ENCODE measurements at regions of chr1 and their contacts with region 1.

Region 1: GRCh38 chr1:33517596-33518250 is 45.3 kb downstream of the ZSCAN20 start:
- DNase-seq: no peak
- ATAC-seq: no peak
- H3K4me3 ChIP-seq: no peak overlapping the region
- H3K27ac ChIP-seq: no peak overlapping the region
- H3K4me1 ChIP-seq: peaks cover 0 to 6% of the 10 kb centered on the region in 2 experiments; a peak in 2 of 5 replicates
- H3K27me3 ChIP-seq: peaks cover 36 to 67% of the 10 kb centered on the region in 2 experiments
- CTCF ChIP-seq: no peak
- EP300 ChIP-seq: no peak
- POLR2A ChIP-seq: no peak
- RAD21 ChIP-seq: no peak

Region 2: GRCh38 chr1:33358778-33359503 is 158.8 kb before region 1 on chr1:
- CTCF ChIA-PET with region 1: no interaction called
- POLR2A ChIA-PET with region 1: no interaction called
- in situ Hi-C with region 1: no loop called
- intact Hi-C with region 1: no loop called
- DNase-seq: no peak
- ATAC-seq: no peak
- H3K4me3 ChIP-seq: no peak overlapping the region
- H3K27ac ChIP-seq: no peak overlapping the region
- H3K4me1 ChIP-seq: peaks cover 7 to 18% of the 10 kb centered on the region in 2 experiments
- H3K27me3 ChIP-seq: no peaks in the 10 kb centered on the region
- CTCF ChIP-seq: no peak
- EP300 ChIP-seq: no peak
- POLR2A ChIP-seq: no peak
- RAD21 ChIP-seq: no peak

Region 3: DNA sequence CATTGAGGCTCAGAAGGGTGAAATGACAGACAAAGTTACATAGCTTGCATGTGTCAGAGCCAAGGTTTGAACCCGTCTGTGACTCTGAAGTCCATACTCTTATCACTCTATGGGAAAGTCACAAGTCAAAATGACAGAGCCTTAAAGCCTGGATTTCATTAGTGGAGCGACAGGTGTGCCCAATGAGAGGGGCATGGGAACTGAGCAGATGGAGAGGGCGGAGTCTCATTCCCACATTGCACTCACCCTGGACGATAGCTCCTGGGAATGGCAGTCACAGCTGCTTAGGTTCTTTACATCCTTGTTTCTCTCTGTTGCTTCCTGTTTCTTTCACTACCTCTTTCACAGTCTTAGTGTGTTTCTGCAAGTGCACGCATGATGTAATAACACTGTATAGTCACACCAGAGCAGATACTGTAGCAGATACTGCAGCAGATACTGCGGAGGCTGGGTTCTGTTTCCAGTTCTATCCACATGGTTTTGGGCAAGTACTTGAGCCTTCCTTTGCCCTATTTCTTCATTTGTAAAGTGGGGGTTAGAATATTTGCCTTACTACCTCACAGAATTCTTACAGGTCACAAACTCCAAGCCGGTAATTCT is 81.9 kb after region 1 on chr1:
- CTCF ChIA-PET with region 1: interaction called, 4 read pairs
- POLR2A ChIA-PET with region 1: no interaction called
- in situ Hi-C with region 1: no loop called
- intact Hi-C with region 1: loop called (anchors 10 kb)
- DNase-seq: no peak
- ATAC-seq: no peak
- H3K4me3 ChIP-seq: no peak overlapping the region
- H3K27ac ChIP-seq: no peak overlapping the region
- H3K4me1 ChIP-seq: no peaks in the 10 kb centered on the region
- H3K27me3 ChIP-seq: peaks cover 0 to 5% of the 10 kb centered on the region in 2 experiments; a peak in 2 of 5 replicates
- CTCF ChIP-seq: no peak
- EP300 ChIP-seq: no peak
- POLR2A ChIP-seq: no peak
- RAD21 ChIP-seq: no peak

Region 4: DNA sequence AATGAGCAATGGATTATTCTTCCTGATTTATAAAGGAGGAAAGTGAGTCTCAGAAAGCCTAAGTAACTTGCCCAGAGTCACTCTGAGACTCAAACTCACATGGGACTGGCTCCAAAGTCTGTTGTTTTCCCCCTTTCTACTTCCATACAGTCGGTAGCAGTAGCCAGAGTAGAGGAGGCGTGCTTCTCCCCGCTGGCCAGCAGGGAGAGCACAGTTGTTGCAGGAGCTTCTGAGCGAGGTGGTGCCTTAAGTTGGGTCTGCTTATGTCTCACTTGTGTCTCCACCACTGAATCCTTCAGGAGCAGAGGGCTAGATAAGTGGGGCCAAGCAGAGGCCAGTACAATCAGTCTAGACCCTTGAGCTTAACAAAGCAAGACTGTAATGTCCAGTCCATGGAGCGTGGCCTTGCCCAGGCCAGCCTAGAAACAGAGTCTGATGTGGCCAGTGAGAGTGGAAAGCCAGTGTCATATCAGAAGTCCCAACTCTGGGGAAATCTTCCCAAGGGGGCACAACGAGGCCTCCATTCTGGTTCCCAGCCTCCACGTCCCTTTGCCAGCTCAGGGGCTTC is 136.6 kb after region 1 on chr1:
- CTCF ChIA-PET with region 1: no interaction called
- POLR2A ChIA-PET with region 1: no interaction called
- in situ Hi-C with region 1: no loop called
- intact Hi-C with region 1: no loop called
- DNase-seq: peak in 1 of 4 experiments; percentile 22
- ATAC-seq: peak; percentile 72
- H3K4me3 ChIP-seq: no peak overlapping the region
- H3K27ac ChIP-seq: no peak overlapping the region
- H3K4me1 ChIP-seq: no peaks in the 10 kb centered on the region
- H3K27me3 ChIP-seq: peaks cover 7 to 29% of the 10 kb centered on the region in 2 experiments; a peak in 3 of 5 replicates
- CTCF ChIP-seq: peak; percentile 19 to 36 (median 27); a peak in 1 of 6 replicates
- EP300 ChIP-seq: no peak
- POLR2A ChIP-seq: no peak
- RAD21 ChIP-seq: no peak

Measured in K562 (cell line).